Breast epithelium (tissue), 4 donors: ENCODE measurements at regions of chr20 and their contacts with region 1.

Region 1: DNA sequence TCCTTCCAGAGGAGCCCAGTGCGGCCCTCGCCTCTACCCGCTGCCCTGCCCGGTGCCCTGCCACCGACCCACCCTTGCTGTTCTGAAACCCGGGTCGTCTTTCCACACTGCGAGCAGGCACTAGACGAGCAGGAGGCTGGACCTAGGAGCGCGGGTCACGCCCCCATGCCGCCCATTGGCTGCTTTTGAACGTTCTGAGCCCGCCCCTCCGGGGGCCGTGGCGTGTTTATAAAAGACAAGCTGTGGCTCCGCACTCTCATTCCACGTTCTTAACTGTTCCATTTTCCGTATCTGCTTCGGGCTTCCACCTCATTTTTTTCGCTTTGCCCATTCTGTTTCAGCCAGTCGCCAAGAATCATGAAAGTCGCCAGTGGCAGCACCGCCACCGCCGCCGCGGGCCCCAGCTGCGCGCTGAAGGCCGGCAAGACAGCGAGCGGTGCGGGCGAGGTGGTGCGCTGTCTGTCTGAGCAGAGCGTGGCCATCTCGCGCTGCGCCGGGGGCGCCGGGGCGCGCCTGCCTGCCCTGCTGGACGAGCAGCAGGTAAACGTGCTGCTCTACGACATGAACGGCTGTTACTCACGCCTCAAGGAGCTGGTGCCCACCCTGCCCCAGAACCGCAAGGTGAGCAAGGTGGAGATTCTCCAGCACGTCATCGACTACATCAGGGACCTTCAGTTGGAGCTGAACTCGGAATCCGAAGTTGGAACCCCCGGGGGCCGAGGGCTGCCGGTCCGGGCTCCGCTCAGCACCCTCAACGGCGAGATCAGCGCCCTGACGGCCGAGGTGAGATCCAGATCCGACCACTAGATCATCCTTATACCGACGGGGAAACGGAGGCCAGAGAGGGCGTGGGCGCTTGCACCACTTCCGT is at the start of gene ID1:
- DNase-seq: peak; percentile 86 to 89
- H3K4me3 ChIP-seq: peak within 1 kb of the TSS; percentile 73 to 91 (median 73)
- H3K27ac ChIP-seq: peak within 1 kb of the TSS; percentile 77 to 88
- H3K4me1 ChIP-seq: peaks cover 5 to 20% of the 10 kb centered on the region in 2 donors
- H3K27me3 ChIP-seq: no peaks in the 10 kb centered on the region
- CTCF ChIP-seq: no peak
- POLR2A ChIP-seq: peak; percentile 65
- total RNA-seq, gene ID1: 156 to 407 (median 270) TPM

Region 2: DNA sequence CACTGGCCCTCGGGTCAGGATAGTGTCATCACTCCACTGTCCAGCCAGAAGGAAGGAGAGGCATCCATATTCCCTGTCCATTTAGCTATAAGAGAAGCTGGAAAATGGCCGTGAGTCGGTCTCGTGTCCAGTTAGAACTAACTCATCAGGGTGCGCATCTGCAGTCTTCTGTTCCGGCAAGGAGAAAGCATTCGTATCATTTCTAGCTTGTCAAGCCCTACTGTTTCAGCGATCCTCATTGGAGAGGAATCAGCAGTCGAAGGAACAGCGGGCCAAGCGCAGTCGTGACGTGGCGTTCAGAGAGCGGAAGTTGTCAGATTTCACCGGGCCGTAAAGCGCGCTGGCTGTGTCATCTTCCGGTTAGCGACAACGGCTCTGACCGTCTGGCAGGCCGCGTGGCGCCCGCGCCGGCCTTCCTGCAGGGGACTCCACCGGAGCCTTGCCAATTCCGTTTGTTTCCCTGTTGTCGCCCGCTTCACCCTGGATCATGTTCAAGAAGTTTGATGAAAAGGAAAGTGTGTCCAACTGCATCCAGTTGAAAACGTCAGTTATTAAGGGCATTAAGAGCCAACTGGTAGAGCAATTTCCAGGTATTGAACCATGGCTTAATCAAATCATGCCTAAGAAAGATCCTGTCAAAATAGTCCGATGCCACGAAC is 58.1 kb before region 1 on chr20:
- intact Hi-C with region 1: no loop called
- DNase-seq: peak; percentile 79 to 85
- H3K4me3 ChIP-seq: peak overlapping the region; percentile 44 to 65 (median 53)
- H3K27ac ChIP-seq: peak overlapping the region; percentile 90 to 91
- H3K4me1 ChIP-seq: no peaks in the 10 kb centered on the region
- H3K27me3 ChIP-seq: no peaks in the 10 kb centered on the region
- CTCF ChIP-seq: no peak
- POLR2A ChIP-seq: peak; percentile 44

Region 3: GRCh38 chr20:31572701-31573554 is 32.3 kb before region 1 on chr20:
- intact Hi-C with region 1: loop called (anchors 5 kb)
- DNase-seq: peak; percentile 90 to 94
- H3K4me3 ChIP-seq: peak overlapping the region; percentile 49 to 70 (median 57)
- H3K27ac ChIP-seq: peak overlapping the region; percentile 93 to 94
- H3K4me1 ChIP-seq: peaks cover 0 to 9% of the 10 kb centered on the region in 2 donors
- H3K27me3 ChIP-seq: no peaks in the 10 kb centered on the region
- CTCF ChIP-seq: peak in 1 of 3 donors; percentile 14
- POLR2A ChIP-seq: no peak